ENCODE measurements at regions of chr19 and their contacts with region 1.

Region 1: DNA sequence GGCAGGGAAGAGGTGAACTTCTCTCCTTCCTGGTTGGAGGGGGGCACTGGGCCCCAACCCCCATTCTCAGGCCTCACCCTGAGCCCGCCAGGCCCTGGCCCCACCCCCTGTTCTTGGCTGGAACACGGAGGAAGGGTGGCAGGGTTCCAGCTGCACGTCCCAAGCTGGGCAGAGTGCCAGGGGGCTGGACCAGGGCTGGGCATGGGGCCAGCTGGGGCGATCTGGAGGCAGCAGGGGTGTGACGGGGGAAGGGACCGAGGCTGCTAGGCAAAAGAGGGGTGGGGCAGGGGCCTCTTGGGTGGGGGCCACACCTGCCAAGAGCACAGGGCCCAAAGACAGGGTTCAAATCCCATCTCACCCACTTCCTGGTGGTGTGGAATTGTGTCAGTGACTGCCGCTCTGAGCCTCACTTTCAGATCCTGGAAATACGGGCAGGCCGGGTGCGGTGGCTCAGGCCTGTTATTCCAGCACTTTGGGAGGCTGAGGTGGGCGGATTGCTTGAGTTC is 2.2 kb downstream of the HIF3A start:
- DNase-seq: no peak
- ATAC-seq: no peak
- H3K4me3 Mint-ChIP-seq: 0 out of 2 replicates have a peak overlapping the region, but pooled peaks have one; percentile 12
- H3K27ac Mint-ChIP-seq: no peak overlapping the region
- H3K4me1 Mint-ChIP-seq: peaks cover 38% of the 10 kb centered on the region
- H3K27me3 Mint-ChIP-seq: peaks cover 18% of the 10 kb centered on the region
- CTCF ChIP-seq: no peak

Region 2: DNA sequence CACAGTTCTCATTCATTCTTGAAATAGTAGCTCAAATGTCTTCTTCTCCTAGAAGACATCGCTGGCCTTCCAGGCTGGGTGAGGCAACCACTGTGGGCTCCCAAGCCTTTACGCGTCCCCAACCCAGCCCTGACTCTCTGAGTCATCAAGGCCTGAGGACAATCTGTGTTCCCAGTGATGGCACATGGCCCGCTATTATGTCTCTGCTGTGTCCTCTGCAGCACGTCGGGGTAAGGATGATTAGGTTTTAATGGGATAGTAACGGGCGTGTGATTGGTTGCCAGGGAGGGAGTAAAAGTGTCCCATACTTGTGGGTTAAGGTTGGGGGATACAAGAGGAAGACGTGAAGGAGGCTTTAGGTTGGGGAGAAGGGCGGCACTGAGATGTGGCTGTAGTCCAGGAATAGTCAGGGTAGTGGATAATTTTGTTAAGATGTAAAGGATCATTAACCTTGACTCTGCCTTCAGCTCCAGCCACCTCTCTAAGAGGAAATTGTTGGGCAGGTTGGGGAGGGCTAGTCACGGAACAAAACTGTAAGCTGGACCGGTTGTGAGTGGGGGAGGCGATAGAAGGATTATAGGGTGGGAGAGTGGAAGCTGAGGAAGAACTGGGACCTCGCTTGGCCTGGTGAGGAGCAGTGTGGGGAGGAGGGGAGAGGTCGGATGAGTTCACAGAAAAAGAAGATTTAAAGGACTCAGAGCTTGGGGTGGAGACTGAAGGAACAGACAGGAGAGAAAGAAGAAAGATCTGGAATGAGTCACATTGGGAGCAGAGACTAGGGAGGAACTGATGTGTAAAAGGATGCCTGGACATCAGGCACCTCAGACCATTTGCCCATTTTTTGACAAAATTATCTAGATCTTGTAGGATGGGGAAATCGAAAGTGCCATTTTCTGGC is 97.4 kb before region 1 on chr19:
- CTCF ChIA-PET with region 1: no interaction called
- POLR2A ChIA-PET with region 1: no interaction called
- DNase-seq: no peak
- ATAC-seq: no peak
- H3K4me3 Mint-ChIP-seq: no peak overlapping the region
- H3K27ac Mint-ChIP-seq: no peak overlapping the region
- H3K4me1 Mint-ChIP-seq: no peaks in the 10 kb centered on the region
- H3K27me3 Mint-ChIP-seq: peaks cover 24% of the 10 kb centered on the region
- CTCF ChIP-seq: no peak

Region 3: GRCh38 chr19:46239193-46240024 is 59.6 kb before region 1 on chr19:
- CTCF ChIA-PET with region 1: no interaction called
- POLR2A ChIA-PET with region 1: no interaction called
- DNase-seq: no peak
- ATAC-seq: no peak
- H3K4me3 Mint-ChIP-seq: no peak overlapping the region
- H3K27ac Mint-ChIP-seq: no peak overlapping the region
- H3K4me1 Mint-ChIP-seq: no peaks in the 10 kb centered on the region
- H3K27me3 Mint-ChIP-seq: no peaks in the 10 kb centered on the region; the same call in none of the 2 replicates
- CTCF ChIP-seq: no peak

Region 4: GRCh38 chr19:46251412-46251811 is 47.6 kb before region 1 on chr19:
- CTCF ChIA-PET with region 1: no interaction called
- POLR2A ChIA-PET with region 1: no interaction called
- DNase-seq: no peak
- ATAC-seq: no peak
- H3K4me3 Mint-ChIP-seq: no peak overlapping the region
- H3K27ac Mint-ChIP-seq: no peak overlapping the region
- H3K4me1 Mint-ChIP-seq: 0 out of 2 replicates have a peak, but pooled peaks cover 3% of the 10 kb centered on the region
- H3K27me3 Mint-ChIP-seq: no peaks in the 10 kb centered on the region; the same call in 1 of the 2 replicates
- CTCF ChIP-seq: no peak

Region 5: GRCh38 chr19:46346821-46347571 is 47.9 kb after region 1 on chr19 and contains the start of gene PPP5C:
- CTCF ChIA-PET with region 1: interaction called, 16 read pairs
- POLR2A ChIA-PET with region 1: interaction called, 6 read pairs
- DNase-seq: peak; percentile 92
- ATAC-seq: peak; percentile 84
- H3K4me3 Mint-ChIP-seq: peak within 1 kb of the TSS; percentile 92
- H3K27ac Mint-ChIP-seq: peak within 1 kb of the TSS; percentile 94
- H3K4me1 Mint-ChIP-seq: peaks cover 52% of the 10 kb centered on the region
- H3K27me3 Mint-ChIP-seq: no peaks in the 10 kb centered on the region
- CTCF ChIP-seq: peak; percentile 60; the same call in 1 of the 2 replicates
- total RNA-seq, gene PPP5C: 98.9 to 107 TPM (median 103 TPM) in 3 replicates

Region 6: GRCh38 chr19:46571531-46571930 is 272.5 kb after region 1 on chr19:
- CTCF ChIA-PET with region 1: no interaction called
- POLR2A ChIA-PET with region 1: no interaction called
- DNase-seq: peak; percentile 61
- ATAC-seq: peak; percentile 100
- H3K4me3 Mint-ChIP-seq: no peak overlapping the region
- H3K27ac Mint-ChIP-seq: no peak overlapping the region
- H3K4me1 Mint-ChIP-seq: peaks cover 6% of the 10 kb centered on the region; the same call in 1 of the 2 replicates
- H3K27me3 Mint-ChIP-seq: peaks cover 10% of the 10 kb centered on the region
- CTCF ChIP-seq: no peak